ENCODE measurements at regions of chr12 and their contacts with region 1.

Region 1: DNA sequence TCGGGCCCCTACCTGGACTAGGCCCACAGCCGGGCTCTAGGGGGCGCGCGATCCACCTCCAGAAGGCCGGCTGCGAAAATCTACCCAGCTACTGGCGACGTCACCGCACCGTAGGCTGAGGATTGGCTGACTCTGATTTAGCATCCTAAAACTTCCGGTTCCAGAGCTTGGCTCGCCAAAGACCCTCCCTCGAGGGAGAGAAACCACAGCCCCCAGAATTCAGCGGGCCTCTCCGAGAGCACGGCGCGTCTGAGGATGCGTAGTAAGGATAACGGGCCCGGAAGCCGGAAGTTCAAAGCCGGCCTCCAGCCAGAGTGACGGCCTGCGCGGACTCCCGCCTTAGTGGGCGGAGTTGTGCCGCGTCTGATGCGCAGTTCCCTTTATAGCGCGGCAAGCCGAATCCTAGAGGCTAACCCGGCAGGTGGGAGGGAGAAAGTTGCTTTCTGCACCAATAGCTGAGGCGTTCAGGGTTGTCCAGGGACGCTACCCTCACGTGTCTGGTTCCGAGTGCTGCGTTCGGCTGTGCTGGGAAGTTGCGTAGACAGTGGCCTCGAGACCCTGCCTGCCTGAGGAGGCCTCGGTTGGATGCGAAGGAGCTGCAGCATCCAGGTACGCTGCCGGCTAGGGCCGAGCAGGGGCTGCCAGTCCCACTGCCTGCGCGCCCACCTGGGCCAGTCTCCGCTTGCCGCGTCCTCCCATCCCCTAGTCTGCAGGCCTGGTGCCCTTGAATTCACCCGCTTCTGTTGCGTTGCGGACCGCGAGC is at the start of gene COX14:
- DNase-seq: peak; percentile 97 to 100 (median 99)
- ATAC-seq: peak; percentile 83
- H3K4me3 ChIP-seq: peak within 1 kb of the TSS; percentile 100
- H3K4me3 Mint-ChIP-seq: peak within 1 kb of the TSS; percentile 95
- H3K27ac ChIP-seq: peak within 1 kb of the TSS; percentile 87 to 97
- H3K27ac Mint-ChIP-seq: peak within 1 kb of the TSS; percentile 96
- H3K4me1 ChIP-seq: peaks cover 55% of the 10 kb centered on the region
- H3K4me1 Mint-ChIP-seq: peaks cover 39% of the 10 kb centered on the region
- H3K27me3 ChIP-seq: no peaks in the 10 kb centered on the region
- H3K27me3 Mint-ChIP-seq: no peaks in the 10 kb centered on the region
- CTCF ChIP-seq: peak; percentile 97
- total RNA-seq, gene COX14: 51.1 to 52.8 TPM

Region 2: DNA sequence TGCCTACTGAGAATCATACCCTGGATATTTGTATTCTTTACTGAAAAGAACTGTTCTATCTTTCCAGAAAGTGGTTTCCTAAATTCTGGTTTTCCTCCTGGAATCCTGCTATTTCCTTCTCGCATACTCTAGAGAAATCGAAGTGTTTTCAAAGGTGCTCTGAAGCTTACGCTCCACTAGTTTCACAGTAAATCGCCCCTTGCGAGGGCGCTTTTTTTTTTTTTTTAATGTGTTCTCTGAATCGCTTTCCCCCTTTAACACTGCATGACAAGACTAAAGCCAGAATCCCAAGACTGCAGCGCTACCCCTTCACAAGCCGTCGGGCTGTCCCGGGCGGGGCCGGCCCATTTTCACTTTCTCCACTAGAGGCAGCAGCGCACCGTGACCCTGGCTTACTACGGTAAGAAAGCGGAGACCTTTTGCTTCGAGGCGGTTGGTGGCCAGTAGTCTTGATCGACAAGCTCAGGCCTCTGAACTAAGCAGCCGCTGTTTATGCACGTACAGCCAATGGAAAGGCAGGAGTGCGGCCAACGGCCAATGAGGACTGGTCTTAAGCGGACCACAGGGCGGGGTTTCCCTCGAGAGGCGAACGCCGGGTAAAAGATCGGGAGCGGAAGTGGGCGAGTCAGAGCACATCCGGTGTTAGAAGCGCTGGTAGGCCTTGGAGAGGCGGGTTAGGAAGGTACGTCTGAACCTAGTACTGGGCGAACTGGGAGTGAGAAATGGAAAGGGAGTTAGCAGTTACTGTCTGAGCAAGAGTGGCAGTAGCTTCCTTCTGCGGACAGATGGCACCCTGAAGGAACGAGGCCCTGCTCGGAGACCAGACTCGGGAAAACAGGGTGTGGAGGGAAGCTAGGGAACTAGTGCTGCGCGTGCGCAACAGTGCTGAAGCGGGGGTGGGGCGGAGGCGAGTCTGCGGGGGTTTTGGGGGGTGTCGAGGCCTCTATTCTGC is 370.7 kb before region 1 on chr12 and contains the start of gene TMBIM6:
- CTCF ChIA-PET with region 1: interaction called, 4 read pairs
- POLR2A ChIA-PET with region 1: interaction called, 16 read pairs
- intact Hi-C with region 1: no loop called
- DNase-seq: peak; percentile 96 to 100 (median 98)
- ATAC-seq: peak; percentile 86
- H3K4me3 ChIP-seq: peak within 1 kb of the TSS; percentile 83
- H3K4me3 Mint-ChIP-seq: peak within 1 kb of the TSS; percentile 92
- H3K27ac ChIP-seq: peak within 1 kb of the TSS; percentile 99
- H3K27ac Mint-ChIP-seq: peak within 1 kb of the TSS; percentile 96
- H3K4me1 ChIP-seq: peaks cover 40% of the 10 kb centered on the region
- H3K4me1 Mint-ChIP-seq: peaks cover 47% of the 10 kb centered on the region
- H3K27me3 ChIP-seq: no peaks in the 10 kb centered on the region
- H3K27me3 Mint-ChIP-seq: no peaks in the 10 kb centered on the region
- CTCF ChIP-seq: peak; percentile 83
- total RNA-seq, gene TMBIM6: 274 to 279 TPM

Region 3: DNA sequence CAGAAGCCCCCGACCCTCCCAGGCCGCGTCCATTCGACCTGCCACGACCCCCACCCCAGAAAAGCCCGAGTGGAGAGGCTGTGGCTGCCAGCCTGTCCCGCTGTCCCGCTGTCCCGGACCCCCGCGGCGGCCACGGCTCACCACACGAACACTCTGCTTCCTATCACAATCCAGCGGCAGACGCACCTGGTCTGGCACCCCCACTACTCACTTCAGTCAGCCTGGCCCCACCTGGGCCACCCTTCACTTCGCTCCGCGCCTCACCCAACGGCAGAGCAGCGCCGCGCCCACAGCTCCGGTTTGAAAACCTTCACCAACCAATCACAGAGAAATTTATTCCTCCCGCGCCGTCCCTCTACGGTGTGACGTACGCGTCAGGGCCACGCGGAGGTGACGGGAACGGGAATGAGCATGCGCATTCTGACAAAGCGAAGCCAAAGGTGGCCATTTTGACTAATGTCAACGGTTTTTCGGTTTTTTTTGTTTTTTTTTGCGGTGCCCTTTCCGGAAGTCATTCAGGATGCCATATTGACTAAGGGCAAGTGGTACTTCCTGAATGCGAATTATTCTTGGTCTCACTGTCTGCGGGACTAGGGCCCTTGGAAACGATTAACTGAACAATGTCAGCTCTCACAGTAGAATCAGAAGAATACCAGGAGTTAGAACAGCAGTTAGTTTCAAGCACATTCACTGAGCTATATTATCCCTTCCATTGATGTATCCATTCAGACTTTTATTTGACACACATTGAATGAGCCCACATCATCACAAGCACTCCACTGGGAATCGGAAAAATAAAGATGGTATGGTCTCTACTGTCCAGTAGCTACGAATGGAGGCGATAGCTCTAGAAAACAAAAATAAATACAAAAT is 86.5 kb before region 1 on chr12 and contains the start of gene RACGAP1:
- CTCF ChIA-PET with region 1: interaction called, 16 read pairs
- POLR2A ChIA-PET with region 1: interaction called, 10 read pairs
- intact Hi-C with region 1: loop called (anchors 1 kb)
- DNase-seq: peak; percentile 88 to 99 (median 94)
- ATAC-seq: peak; percentile 97
- H3K4me3 ChIP-seq: peak within 1 kb of the TSS; percentile 75
- H3K4me3 Mint-ChIP-seq: peak within 1 kb of the TSS; percentile 94
- H3K27ac ChIP-seq: peak within 1 kb of the TSS; percentile 16 to 28
- H3K27ac Mint-ChIP-seq: peak within 1 kb of the TSS; percentile 66
- H3K4me1 ChIP-seq: peaks cover 18% of the 10 kb centered on the region
- H3K4me1 Mint-ChIP-seq: peaks cover 15% of the 10 kb centered on the region
- H3K27me3 ChIP-seq: no peaks in the 10 kb centered on the region
- H3K27me3 Mint-ChIP-seq: peaks cover 13% of the 10 kb centered on the region
- CTCF ChIP-seq: no peak
- total RNA-seq, gene RACGAP1: 3.0 to 3.3 TPM

Region 4: GRCh38 chr12:50127546-50127945 is 15.7 kb after region 1 on chr12:
- CTCF ChIA-PET with region 1: interaction called, 28 read pairs
- POLR2A ChIA-PET with region 1: interaction called, 39 read pairs
- intact Hi-C with region 1: loop called (anchors 1 kb)
- DNase-seq: no peak
- ATAC-seq: no peak
- H3K4me3 ChIP-seq: no peak overlapping the region
- H3K4me3 Mint-ChIP-seq: no peak overlapping the region
- H3K27ac ChIP-seq: no peak overlapping the region
- H3K27ac Mint-ChIP-seq: no peak overlapping the region
- H3K4me1 ChIP-seq: peaks cover 4% of the 10 kb centered on the region
- H3K4me1 Mint-ChIP-seq: peaks cover 33% of the 10 kb centered on the region
- H3K27me3 ChIP-seq: no peaks in the 10 kb centered on the region
- H3K27me3 Mint-ChIP-seq: no peaks in the 10 kb centered on the region
- CTCF ChIP-seq: no peak

Region 5: DNA sequence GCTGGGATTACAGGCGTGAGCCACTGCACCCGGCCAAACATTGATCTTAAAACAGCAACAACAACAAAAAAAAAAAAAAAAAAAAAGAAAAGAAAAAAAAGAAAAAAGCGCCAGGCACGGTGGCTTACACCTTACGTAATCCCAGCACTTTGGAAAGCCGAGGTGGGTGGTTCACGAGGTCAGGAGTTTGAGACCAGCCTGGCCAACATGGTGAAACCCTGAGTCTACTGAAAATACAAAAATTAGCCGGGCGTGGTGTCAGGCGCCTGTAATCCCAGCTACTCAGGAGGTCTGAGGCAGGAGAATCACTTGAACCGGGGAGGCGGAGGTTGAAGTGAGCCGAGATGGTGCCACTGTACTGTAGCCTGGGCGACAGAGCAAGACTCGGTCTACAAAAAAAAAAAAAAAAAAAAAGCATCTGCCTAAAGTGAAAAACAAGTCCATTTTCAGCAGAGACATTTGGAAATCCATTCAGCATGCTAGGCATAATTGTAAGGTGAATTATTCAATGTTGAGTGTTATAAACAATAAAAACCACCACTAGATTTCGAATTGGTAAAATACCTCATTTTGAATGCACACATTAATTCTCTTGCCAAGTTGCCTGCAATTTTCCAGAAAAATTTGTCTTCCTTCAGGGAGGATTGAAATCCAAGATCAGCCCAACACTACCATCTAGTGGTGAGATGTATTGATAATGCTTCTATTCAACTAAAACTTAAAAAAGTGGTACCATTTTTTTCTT is 63.3 kb after region 1 on chr12:
- CTCF ChIA-PET with region 1: interaction called, 21 read pairs
- POLR2A ChIA-PET with region 1: interaction called, 6 read pairs
- intact Hi-C with region 1: loop called in 1 of 2 experiments (anchors 1 kb)
- DNase-seq: peak in 5 of 14 experiments; percentile 8 to 81 (median 69)
- ATAC-seq: peak; percentile 57
- H3K4me3 ChIP-seq: no peak overlapping the region
- H3K4me3 Mint-ChIP-seq: no peak overlapping the region
- H3K27ac ChIP-seq: no peak overlapping the region
- H3K27ac Mint-ChIP-seq: no peak overlapping the region
- H3K4me1 ChIP-seq: no peaks in the 10 kb centered on the region
- H3K4me1 Mint-ChIP-seq: no peaks in the 10 kb centered on the region
- H3K27me3 ChIP-seq: no peaks in the 10 kb centered on the region
- H3K27me3 Mint-ChIP-seq: no peaks in the 10 kb centered on the region
- CTCF ChIP-seq: peak; percentile 90

Region 6: GRCh38 chr12:50283229-50283923 is 171.5 kb after region 1 on chr12 and contains the start of gene LIMA1:
- CTCF ChIA-PET with region 1: interaction called, 4 read pairs
- POLR2A ChIA-PET with region 1: interaction called, 16 read pairs
- intact Hi-C with region 1: loop called in 1 of 2 experiments (anchors 10 kb)
- DNase-seq: peak; percentile 86 to 97 (median 92)
- ATAC-seq: peak; percentile 95
- H3K4me3 ChIP-seq: peak within 1 kb of the TSS; percentile 78
- H3K4me3 Mint-ChIP-seq: peak within 1 kb of the TSS; percentile 94
- H3K27ac ChIP-seq: peak within 1 kb of the TSS; percentile 19 to 53
- H3K27ac Mint-ChIP-seq: peak within 1 kb of the TSS; percentile 86
- H3K4me1 ChIP-seq: peaks cover 22% of the 10 kb centered on the region
- H3K4me1 Mint-ChIP-seq: peaks cover 26% of the 10 kb centered on the region
- H3K27me3 ChIP-seq: no peaks in the 10 kb centered on the region
- H3K27me3 Mint-ChIP-seq: no peaks in the 10 kb centered on the region
- CTCF ChIP-seq: no peak
- total RNA-seq, gene LIMA1: 4.6 to 5.1 TPM